CD4-positive, alpha-beta memory T cell (primary cell): ENCODE measurements at regions of chr13 and their contacts with region 1.

Region 1: GRCh38 chr13:49792550-49793324 is at the start of gene KPNA3:
- DNase-seq: peak; percentile 94 to 96 (median 95)
- H3K4me3 ChIP-seq: peak within 1 kb of the TSS; percentile 74 to 80
- H3K4me3 Mint-ChIP-seq: peak within 1 kb of the TSS; percentile 96 to 99 (median 97)
- H3K27ac ChIP-seq: peak within 1 kb of the TSS; percentile 74
- H3K27ac Mint-ChIP-seq: peak within 1 kb of the TSS; percentile 92 to 98 (median 98)
- H3K4me1 ChIP-seq: peaks cover 37% of the 10 kb centered on the region
- H3K4me1 Mint-ChIP-seq: peaks cover 22 to 42% (median 36%) of the 10 kb centered on the region in 4 donors
- H3K27me3 ChIP-seq: no peaks in the 10 kb centered on the region
- H3K27me3 Mint-ChIP-seq: peaks cover 0 to 5% of the 10 kb centered on the region in 2 donors
- total RNA-seq, gene KPNA3: 21.1 to 22.4 TPM

Region 2: GRCh38 chr13:48037346-48038173 is 1755.2 kb before region 1 on chr13 and contains the start of gene NUDT15:
- CTCF ChIA-PET with region 1: no interaction called
- POLR2A ChIA-PET with region 1: interaction called, 3 read pairs
- intact Hi-C with region 1: loop called (anchors 2 kb)
- DNase-seq: peak; percentile 96 to 97 (median 97)
- H3K4me3 ChIP-seq: peak within 1 kb of the TSS; percentile 83 to 87
- H3K4me3 Mint-ChIP-seq: peak within 1 kb of the TSS; percentile 87 to 96 (median 93)
- H3K27ac ChIP-seq: peak within 1 kb of the TSS; percentile 94
- H3K27ac Mint-ChIP-seq: peak within 1 kb of the TSS; percentile 95 to 99 (median 97)
- H3K4me1 ChIP-seq: peaks cover 24% of the 10 kb centered on the region
- H3K4me1 Mint-ChIP-seq: peaks cover 13 to 32% (median 27%) of the 10 kb centered on the region in 4 donors
- H3K27me3 ChIP-seq: no peaks in the 10 kb centered on the region
- H3K27me3 Mint-ChIP-seq: no peaks in the 10 kb centered on the region
- total RNA-seq, gene NUDT15: 5.6 to 6.3 TPM

Region 3: GRCh38 chr13:48975856-48976575 is 816.7 kb before region 1 on chr13 and contains the start of gene FNDC3A:
- CTCF ChIA-PET with region 1: no interaction called
- POLR2A ChIA-PET with region 1: interaction called, 3 read pairs
- intact Hi-C with region 1: loop called (anchors 1 kb)
- DNase-seq: peak; percentile 88 to 92 (median 89)
- H3K4me3 ChIP-seq: peak within 1 kb of the TSS; percentile 81 to 83
- H3K4me3 Mint-ChIP-seq: peak within 1 kb of the TSS; percentile 94 to 98 (median 96)
- H3K27ac ChIP-seq: peak within 1 kb of the TSS; percentile 90
- H3K27ac Mint-ChIP-seq: peak within 1 kb of the TSS; percentile 90 to 99 (median 99)
- H3K4me1 ChIP-seq: peaks cover 51% of the 10 kb centered on the region
- H3K4me1 Mint-ChIP-seq: peaks cover 28 to 55% (median 40%) of the 10 kb centered on the region in 4 donors
- H3K27me3 ChIP-seq: no peaks in the 10 kb centered on the region
- H3K27me3 Mint-ChIP-seq: peaks cover 0 to 3% of the 10 kb centered on the region in 2 donors
- total RNA-seq, gene FNDC3A: 43.7 to 44.4 TPM

Region 4: DNA sequence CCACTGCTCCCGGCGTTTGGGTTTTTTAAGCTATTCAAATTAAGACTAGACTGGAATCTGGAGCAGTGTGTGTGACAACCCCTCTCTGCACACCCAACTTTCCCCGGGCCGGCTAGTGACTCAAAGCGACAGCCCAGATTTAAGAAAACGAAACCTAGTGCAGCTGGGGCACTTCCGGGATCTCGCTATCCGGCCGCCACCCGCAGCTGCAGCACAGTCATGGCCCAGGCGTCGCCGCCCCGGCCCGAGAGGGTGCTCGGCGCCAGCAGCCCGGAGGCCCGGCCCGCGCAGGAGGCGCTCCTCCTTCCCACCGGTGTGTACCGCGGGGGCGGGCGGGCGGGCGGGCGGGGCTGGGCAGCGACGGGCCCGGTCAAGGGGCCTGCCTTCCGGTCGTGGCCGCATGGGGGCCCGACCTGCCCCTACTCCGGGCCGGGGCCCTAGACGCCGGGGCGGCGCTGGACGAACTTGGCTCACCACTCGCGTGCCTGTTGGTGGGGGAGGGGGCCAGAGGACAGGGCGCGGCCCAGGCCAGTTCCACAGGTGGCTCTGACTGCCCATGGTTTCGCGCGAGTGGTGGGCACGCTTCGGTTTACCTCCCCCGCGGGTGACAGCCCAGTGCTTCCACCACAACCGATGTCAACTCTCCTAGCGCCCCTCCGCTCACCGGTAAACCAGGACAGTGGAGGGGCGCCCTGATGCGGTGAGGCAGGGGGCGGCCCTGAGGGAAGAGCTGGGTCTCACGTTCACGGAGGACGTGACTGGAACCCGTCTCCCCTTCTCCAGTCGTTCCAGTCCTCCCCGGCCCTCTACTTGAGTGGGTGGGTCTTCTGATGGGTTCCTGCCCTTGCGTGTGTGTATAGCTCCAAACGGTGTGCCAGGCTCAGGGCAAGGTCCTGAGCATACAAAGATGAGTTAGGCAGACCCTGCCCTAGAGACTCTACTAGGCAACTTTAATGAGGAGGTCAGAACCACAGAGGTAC is 296.7 kb before region 1 on chr13 and contains the start of gene PHF11:
- CTCF ChIA-PET with region 1: no interaction called
- POLR2A ChIA-PET with region 1: interaction called, 13 read pairs
- intact Hi-C with region 1: no loop called
- DNase-seq: peak; percentile 85 to 93 (median 87)
- H3K4me3 ChIP-seq: peak within 1 kb of the TSS; percentile 58 to 74
- H3K4me3 Mint-ChIP-seq: peak within 1 kb of the TSS; percentile 98 to 99 (median 98)
- H3K27ac ChIP-seq: peak within 1 kb of the TSS; percentile 94
- H3K27ac Mint-ChIP-seq: peak within 1 kb of the TSS; percentile 99
- H3K4me1 ChIP-seq: peaks cover 54% of the 10 kb centered on the region
- H3K4me1 Mint-ChIP-seq: peaks cover 40 to 64% (median 49%) of the 10 kb centered on the region in 4 donors
- H3K27me3 ChIP-seq: no peaks in the 10 kb centered on the region
- H3K27me3 Mint-ChIP-seq: no peaks in the 10 kb centered on the region
- total RNA-seq, gene PHF11: 138 to 139 TPM

Region 5: DNA sequence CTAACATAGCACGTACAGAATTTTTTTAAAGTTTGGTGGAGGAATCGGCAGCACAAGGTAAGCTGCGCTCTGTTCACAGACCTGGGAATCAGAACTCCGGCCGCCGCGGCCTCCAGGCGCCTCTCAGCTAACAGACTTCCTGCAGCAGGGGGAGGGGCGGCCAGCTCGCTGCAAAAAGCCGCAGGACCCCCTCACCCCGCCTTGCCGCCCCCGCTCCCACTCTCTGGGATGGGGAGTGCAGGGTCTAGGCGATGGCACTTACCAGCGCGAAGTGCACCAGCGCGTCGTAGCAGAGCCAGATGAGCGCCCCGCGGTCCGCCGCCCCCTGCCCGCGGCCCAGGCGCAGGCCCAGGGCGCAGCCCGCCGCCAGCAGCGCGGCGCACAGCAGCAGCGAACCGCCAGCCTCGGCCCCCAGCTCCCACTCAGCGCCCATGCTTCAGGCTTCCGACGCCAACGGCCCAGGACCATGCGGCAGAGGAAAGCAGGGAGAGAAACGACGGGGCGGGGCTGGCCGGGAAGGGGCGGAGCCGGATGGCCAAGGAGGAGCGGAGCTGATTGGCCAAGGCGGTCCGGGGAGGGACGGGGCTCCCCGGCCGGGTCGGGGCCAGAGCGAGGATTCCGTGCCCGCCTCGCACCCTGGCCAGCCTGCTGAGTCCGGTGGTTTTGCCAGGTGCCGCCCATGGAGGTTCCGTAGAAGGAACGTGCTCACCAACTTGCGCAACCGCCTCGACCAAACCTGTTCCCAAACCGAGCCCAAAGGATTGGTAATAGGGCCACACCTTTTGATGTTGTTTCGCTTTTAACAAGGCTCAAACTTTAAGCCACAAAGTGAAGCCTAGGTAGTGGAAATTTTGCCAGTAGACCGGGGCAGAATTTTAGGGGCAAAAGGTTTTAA is 101.5 kb before region 1 on chr13 and contains the start of gene EBPL:
- CTCF ChIA-PET with region 1: interaction called, 5 read pairs
- POLR2A ChIA-PET with region 1: interaction called, 44 read pairs
- intact Hi-C with region 1: loop called (anchors 1 kb)
- DNase-seq: peak; percentile 70 to 86 (median 78)
- H3K4me3 ChIP-seq: peak within 1 kb of the TSS; percentile 50 to 93
- H3K4me3 Mint-ChIP-seq: peak within 1 kb of the TSS; percentile 87 to 93 (median 90)
- H3K27ac ChIP-seq: peak within 1 kb of the TSS; percentile 55
- H3K27ac Mint-ChIP-seq: peak within 1 kb of the TSS; percentile 59 to 90 (median 74)
- H3K4me1 ChIP-seq: peaks cover 19% of the 10 kb centered on the region
- H3K4me1 Mint-ChIP-seq: peaks cover 19 to 39% (median 31%) of the 10 kb centered on the region in 4 donors
- H3K27me3 ChIP-seq: no peaks in the 10 kb centered on the region
- H3K27me3 Mint-ChIP-seq: no peaks in the 10 kb centered on the region
- total RNA-seq, gene EBPL: 15.1 to 15.3 TPM

Region 6: GRCh38 chr13:49814551-49815270 is 22.0 kb after region 1 on chr13:
- CTCF ChIA-PET with region 1: no interaction called
- POLR2A ChIA-PET with region 1: no interaction called
- intact Hi-C with region 1: no loop called
- DNase-seq: no peak
- H3K4me3 ChIP-seq: no peak overlapping the region
- H3K4me3 Mint-ChIP-seq: no peak overlapping the region
- H3K27ac ChIP-seq: no peak overlapping the region
- H3K27ac Mint-ChIP-seq: peak overlapping the region in 1 of 7 donors; percentile 7
- H3K4me1 ChIP-seq: no peaks in the 10 kb centered on the region
- H3K4me1 Mint-ChIP-seq: no peaks in the 10 kb centered on the region
- H3K27me3 ChIP-seq: no peaks in the 10 kb centered on the region
- H3K27me3 Mint-ChIP-seq: peaks cover 11 to 19% of the 10 kb centered on the region in 2 donors

Region 7: DNA sequence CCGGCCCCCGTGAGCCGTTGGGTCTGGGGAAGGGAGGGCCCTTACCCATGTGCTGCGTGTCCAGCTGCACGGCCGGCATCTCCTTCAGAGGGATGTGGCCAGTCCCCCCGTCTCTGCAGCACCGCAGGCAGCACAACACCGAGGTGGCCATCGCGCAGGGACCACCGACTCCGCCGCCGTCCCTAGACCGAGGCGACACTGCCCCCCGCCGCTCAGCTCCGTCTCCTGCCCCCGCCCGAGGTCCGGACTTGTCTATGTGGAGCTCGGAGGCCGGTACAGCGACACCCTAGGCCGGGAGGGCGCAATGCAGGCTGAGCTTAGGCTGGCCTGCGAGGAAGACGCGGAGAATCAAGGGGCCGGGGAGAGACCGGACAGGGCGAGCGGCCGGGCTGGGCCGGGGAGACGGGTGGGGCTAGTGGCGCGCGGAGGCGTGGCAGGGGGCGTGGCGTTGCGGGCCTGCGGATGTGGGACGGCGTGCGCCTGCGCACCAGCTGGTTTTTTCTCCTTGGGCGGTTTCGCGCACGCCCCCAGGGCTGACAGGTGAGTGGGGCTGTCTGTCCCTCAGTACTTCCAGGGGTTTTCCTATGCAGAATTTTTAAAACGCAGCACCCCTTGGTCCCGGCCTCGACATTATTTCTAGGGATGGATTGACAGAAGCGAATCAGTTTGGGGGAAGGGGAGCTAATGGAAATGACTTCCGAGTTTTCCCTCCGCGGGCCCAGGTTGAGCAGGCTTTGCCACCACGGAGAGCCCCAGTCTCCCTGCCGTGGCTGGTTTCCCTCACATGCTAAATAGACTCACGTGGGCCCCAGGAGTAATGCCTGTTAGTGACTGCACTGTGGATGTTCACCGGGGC is 143.6 kb after region 1 on chr13 and contains the start of gene SPRYD7:
- CTCF ChIA-PET with region 1: interaction called, 10 read pairs
- POLR2A ChIA-PET with region 1: interaction called, 11 read pairs
- intact Hi-C with region 1: loop called (anchors 1 kb)
- DNase-seq: peak; percentile 89 to 92 (median 92)
- H3K4me3 ChIP-seq: peak within 1 kb of the TSS; percentile 66 to 96
- H3K4me3 Mint-ChIP-seq: peak within 1 kb of the TSS; percentile 91 to 97 (median 95)
- H3K27ac ChIP-seq: peak within 1 kb of the TSS; percentile 63
- H3K27ac Mint-ChIP-seq: peak within 1 kb of the TSS; percentile 85 to 97 (median 94)
- H3K4me1 ChIP-seq: peaks cover 19% of the 10 kb centered on the region
- H3K4me1 Mint-ChIP-seq: peaks cover 12 to 23% (median 15%) of the 10 kb centered on the region in 4 donors
- H3K27me3 ChIP-seq: no peaks in the 10 kb centered on the region
- H3K27me3 Mint-ChIP-seq: no peaks in the 10 kb centered on the region
- total RNA-seq, gene SPRYD7: 3.3 to 5.1 TPM

Region 8: GRCh38 chr13:50911937-50912795 is 1119.4 kb after region 1 on chr13:
- CTCF ChIA-PET with region 1: interaction called, 4 read pairs
- POLR2A ChIA-PET with region 1: interaction called, 11 read pairs
- intact Hi-C with region 1: loop called (anchors 5 kb)
- DNase-seq: peak; percentile 82 to 90 (median 83)
- H3K4me3 ChIP-seq: peak overlapping the region; percentile 73 to 92
- H3K4me3 Mint-ChIP-seq: peak overlapping the region; percentile 82 to 98 (median 94)
- H3K27ac ChIP-seq: peak overlapping the region; percentile 79
- H3K27ac Mint-ChIP-seq: peak overlapping the region; percentile 89 to 98 (median 95)
- H3K4me1 ChIP-seq: peaks cover 69% of the 10 kb centered on the region
- H3K4me1 Mint-ChIP-seq: peaks cover 43 to 59% (median 50%) of the 10 kb centered on the region in 4 donors
- H3K27me3 ChIP-seq: no peaks in the 10 kb centered on the region
- H3K27me3 Mint-ChIP-seq: peaks cover 0 to under 1% of the 10 kb centered on the region in 2 donors